Lower leg skin (tissue), 4 donors: ENCODE measurements at regions of chr2 and their contacts with region 1.

Region 1: GRCh38 chr2:209334198-209335017 is 89.4 kb upstream of the MAP2 start:
- DNase-seq: peak in 1 of 2 donors; percentile 19
- H3K4me3 ChIP-seq: no peak overlapping the region
- CTCF ChIP-seq: peak in 1 of 3 donors; percentile 41
- POLR2A ChIP-seq: no peak

Region 2: GRCh38 chr2:209044306-209044705 is 290.1 kb before region 1 on chr2:
- intact Hi-C with region 1: no loop called
- DNase-seq: no peak
- H3K4me3 ChIP-seq: no peak overlapping the region
- CTCF ChIP-seq: no peak
- POLR2A ChIP-seq: no peak

Region 3: GRCh38 chr2:209423562-209424198 is 89.3 kb after region 1 on chr2 and contains the start of gene MAP2:
- intact Hi-C with region 1: loop called (anchors 10 kb)
- DNase-seq: peak; percentile 55 to 95
- H3K4me3 ChIP-seq: peak within 1 kb of the TSS; percentile 66
- CTCF ChIP-seq: no peak
- POLR2A ChIP-seq: no peak
- total RNA-seq, gene MAP2: 35.1 to 47.8 (median 40.9) TPM

Region 4: GRCh38 chr2:209577376-209578357 is 243.3 kb after region 1 on chr2:
- intact Hi-C with region 1: loop called (anchors 10 kb)
- DNase-seq: no peak
- H3K4me3 ChIP-seq: no peak overlapping the region
- CTCF ChIP-seq: no peak
- POLR2A ChIP-seq: no peak